ENCODE measurements at regions of chr6 and their contacts with region 1.

Region 1: DNA sequence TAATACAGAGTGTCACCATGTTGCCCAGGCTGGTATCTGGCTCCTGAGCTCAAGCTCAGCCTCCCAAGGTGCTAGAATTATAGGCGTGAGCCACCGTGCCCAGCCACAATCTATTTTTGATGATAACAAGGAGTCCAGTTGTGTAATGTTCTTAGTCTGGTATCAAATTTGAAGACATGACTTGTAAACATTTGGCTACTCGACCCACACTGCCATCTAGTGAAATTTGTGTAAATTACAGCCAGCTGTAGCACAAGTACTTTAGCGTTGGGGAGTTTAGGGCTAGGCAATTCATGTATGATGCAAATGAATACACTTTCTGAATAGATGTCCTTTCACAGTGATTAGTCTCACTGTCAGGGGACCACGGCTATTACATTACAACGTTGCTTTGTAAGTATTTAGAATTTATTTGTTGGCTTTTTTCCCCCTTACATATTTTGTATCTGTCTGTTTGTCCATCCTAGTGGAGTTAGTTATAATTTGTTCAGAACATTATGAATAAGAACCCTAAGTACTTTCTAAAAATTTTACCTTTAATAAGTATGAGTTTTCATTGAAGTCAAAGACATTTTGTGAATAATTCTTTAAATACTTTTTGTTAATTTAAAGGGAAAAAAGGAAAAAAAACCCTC is 139.7 kb downstream of the PRDM13 start:
- DNase-seq: peak; percentile 28
- H3K4me3 Mint-ChIP-seq: no peak overlapping the region
- H3K27ac Mint-ChIP-seq: no peak overlapping the region
- H3K4me1 Mint-ChIP-seq: no peaks in the 10 kb centered on the region
- H3K27me3 Mint-ChIP-seq: peaks cover 25% of the 10 kb centered on the region

Region 2: GRCh38 chr6:99330159-99330558 is 416.2 kb before region 1 on chr6:
- intact Hi-C with region 1: loop called (anchors 5 kb)
- DNase-seq: peak; percentile 40
- H3K4me3 Mint-ChIP-seq: no peak overlapping the region
- H3K27ac Mint-ChIP-seq: no peak overlapping the region
- H3K4me1 Mint-ChIP-seq: peaks cover 5% of the 10 kb centered on the region
- H3K27me3 Mint-ChIP-seq: peaks cover 2% of the 10 kb centered on the region

Region 3: DNA sequence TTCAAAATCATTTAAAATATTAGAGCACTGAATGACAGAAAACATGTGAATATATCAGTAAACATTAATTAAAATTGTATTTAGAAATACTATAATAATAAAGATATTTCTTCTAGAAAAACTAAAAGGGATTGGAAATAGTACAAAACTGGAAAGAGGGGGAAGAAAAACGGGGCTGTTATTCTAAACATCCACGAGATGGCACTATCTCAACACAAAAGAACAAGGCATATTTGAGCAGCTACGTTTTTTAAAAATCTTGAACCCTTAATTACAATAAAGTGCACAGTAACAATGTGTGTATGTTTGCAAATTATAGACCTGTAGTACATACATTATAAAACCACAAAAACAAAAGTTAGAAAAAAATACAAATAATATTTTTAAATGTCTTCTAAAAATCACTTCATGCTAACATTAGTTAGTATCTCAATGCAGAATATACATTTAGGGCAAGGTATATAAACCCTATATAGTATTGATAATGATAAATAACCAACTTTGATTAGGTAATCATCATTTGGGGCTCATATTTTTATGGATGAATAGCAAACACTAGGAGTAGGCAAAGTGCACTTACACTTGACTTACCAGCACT is 278.8 kb before region 1 on chr6:
- intact Hi-C with region 1: loop called (anchors 1 kb)
- DNase-seq: no peak
- H3K4me3 Mint-ChIP-seq: no peak overlapping the region
- H3K27ac Mint-ChIP-seq: no peak overlapping the region
- H3K4me1 Mint-ChIP-seq: no peaks in the 10 kb centered on the region
- H3K27me3 Mint-ChIP-seq: no peaks in the 10 kb centered on the region